Activated CD8-positive, alpha-beta T cell treated with anti-CD3 and anti-CD28 coated beads for 36 hours (primary cell): ENCODE measurements at regions of chr11 and their contacts with region 1.

Region 1: GRCh38 chr11:118883368-118884071 is at the start of gene CXCR5:
- DNase-seq: peak; percentile 60
- ATAC-seq: peak; percentile 49
- H3K4me3 Mint-ChIP-seq: peak within 1 kb of the TSS; percentile 57
- H3K27ac Mint-ChIP-seq: peak within 1 kb of the TSS; percentile 77
- H3K4me1 Mint-ChIP-seq: peaks cover 67% of the 10 kb centered on the region
- H3K27me3 Mint-ChIP-seq: no peaks in the 10 kb centered on the region
- CTCF ChIP-seq: no peak
- total RNA-seq, gene CXCR5: 0.60 to 0.92 TPM

Region 2: GRCh38 chr11:118870396-118871345 is 12.8 kb before region 1 on chr11:
- CTCF ChIA-PET with region 1: interaction called, 10 read pairs
- POLR2A ChIA-PET with region 1: interaction called, 9 read pairs
- intact Hi-C with region 1: no loop called
- DNase-seq: peak; percentile 58
- ATAC-seq: peak; percentile 47
- H3K4me3 Mint-ChIP-seq: peak overlapping the region; percentile 80
- H3K27ac Mint-ChIP-seq: peak overlapping the region; percentile 99
- H3K4me1 Mint-ChIP-seq: peaks cover 58% of the 10 kb centered on the region
- H3K27me3 Mint-ChIP-seq: no peaks in the 10 kb centered on the region
- CTCF ChIP-seq: no peak